ENCODE measurements at regions of chr7 and their contacts with region 1.

Region 1: GRCh38 chr7:129376076-129376777 is 58.0 kb upstream of the STRIP2 start:
- DNase-seq: peak in 1 of 3 donors; percentile 95
- ATAC-seq: peak; percentile 96
- H3K4me3 ChIP-seq: no peak overlapping the region
- H3K4me1 ChIP-seq: peaks cover 12% of the 10 kb centered on the region
- CTCF ChIP-seq: peak; percentile 33

Region 2: DNA sequence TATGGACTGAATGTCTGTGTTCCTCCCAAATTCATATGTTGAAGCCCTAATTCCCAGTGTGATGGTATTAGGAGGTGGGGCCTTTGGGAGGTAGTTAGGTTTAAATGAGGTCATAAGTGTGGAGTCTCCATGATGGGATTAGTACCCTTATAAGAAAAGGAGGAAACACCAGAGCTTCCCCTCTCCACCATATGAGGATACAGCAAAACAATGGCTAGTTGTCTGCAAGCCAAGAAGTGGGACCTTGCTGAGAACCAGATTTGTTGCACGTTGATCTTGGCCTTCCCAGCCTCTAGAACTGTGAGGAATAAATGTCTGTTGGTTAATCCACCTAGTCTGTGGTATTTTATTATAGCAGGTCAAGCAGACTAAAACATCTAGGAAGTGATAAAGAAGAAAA is 49.2 kb before region 1 on chr7:
- intact Hi-C with region 1: no loop called
- DNase-seq: no peak
- ATAC-seq: no peak
- H3K4me3 ChIP-seq: no peak overlapping the region
- H3K4me1 ChIP-seq: no peaks in the 10 kb centered on the region
- CTCF ChIP-seq: no peak

Region 3: DNA sequence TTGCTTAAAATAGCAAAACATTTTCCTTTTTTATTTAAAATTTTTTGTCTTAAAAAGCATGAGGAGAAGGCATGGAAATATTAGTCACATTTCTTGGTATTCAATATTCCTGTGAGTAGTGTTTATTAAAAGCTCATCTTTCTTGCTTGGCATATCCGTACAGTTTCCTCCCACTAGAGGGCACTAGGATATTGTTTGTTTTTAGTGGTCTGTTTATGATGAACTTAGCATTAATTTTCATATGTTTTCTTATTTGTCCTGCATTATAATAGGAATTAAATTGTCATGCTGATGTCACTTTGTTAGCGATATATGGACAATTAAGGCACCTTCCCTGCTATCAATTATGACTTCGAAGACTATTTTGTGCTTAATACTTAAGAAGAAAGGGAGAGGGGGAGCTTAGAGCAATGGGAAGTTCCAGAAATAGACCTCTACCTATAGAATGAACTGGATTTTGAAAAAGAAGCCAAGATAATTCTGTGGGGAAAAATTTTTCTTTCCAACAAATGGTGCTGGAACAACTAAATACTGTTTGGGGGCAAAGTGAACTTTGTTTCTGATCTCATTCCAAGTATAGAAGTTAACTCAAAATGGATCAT is 33.0 kb before region 1 on chr7:
- intact Hi-C with region 1: loop called in 1 of 2 experiments (anchors 5 kb)
- DNase-seq: peak in 1 of 3 donors; percentile 75
- ATAC-seq: peak; percentile 58
- H3K4me3 ChIP-seq: no peak overlapping the region
- H3K4me1 ChIP-seq: peaks cover 11% of the 10 kb centered on the region
- CTCF ChIP-seq: peak; percentile 36

Region 4: DNA sequence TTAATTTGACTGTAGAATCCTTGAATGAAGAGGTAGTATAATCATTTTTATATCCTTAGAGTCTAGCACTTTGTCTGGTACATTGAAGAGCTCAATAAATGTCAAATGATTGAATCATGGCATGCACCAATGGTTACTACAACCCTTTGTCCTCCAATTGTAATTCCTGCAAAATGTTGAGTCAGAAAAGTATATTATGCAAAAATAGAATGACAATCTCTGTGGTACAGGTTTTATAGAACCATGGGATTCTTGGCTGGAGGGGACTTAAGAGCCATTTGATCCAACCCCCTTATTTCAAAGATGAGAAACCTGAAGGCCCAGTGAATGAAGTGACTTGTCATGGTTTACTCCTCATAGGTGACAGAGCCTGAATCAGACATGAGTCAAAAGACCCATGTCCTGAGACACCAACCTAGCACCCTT is 95.2 kb after region 1 on chr7:
- intact Hi-C with region 1: loop called in 1 of 2 experiments (anchors 10 kb)
- DNase-seq: no peak
- ATAC-seq: no peak
- H3K4me3 ChIP-seq: no peak overlapping the region
- H3K4me1 ChIP-seq: no peaks in the 10 kb centered on the region
- CTCF ChIP-seq: no peak